Right ventricle myocardium inferior (tissue), 1 donor: ENCODE measurements at regions of chr19 and their contacts with region 1.

Region 1: GRCh38 chr19:41993612-41994483 is at the start of gene ATP1A3:
- DNase-seq: peak; percentile 86
- ATAC-seq: peak; percentile 78
- total RNA-seq, gene ATP1A3: 342 TPM

Region 2: DNA sequence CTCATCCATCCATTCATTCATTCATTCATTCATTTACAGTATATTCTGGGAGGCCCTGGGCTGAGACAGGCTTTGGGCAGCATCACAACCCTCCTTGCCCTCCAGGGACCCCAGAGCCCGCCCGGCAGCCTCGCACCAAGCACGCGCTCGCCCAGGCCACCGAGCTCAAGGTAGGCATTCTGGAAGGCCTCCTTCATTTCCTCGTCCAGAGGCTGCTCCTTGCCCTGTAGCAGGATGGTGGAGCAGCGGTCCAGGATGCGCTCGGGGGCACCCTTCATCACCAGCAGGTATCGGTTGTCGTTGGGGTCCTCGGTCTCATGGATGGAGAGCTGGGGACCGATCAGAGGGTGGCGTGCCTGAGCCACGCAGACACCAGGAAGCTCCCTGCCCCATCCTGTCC is 15.4 kb before region 1 on chr19:
- intact Hi-C with region 1: no loop called
- DNase-seq: peak; percentile 44
- ATAC-seq: no peak

Region 3: DNA sequence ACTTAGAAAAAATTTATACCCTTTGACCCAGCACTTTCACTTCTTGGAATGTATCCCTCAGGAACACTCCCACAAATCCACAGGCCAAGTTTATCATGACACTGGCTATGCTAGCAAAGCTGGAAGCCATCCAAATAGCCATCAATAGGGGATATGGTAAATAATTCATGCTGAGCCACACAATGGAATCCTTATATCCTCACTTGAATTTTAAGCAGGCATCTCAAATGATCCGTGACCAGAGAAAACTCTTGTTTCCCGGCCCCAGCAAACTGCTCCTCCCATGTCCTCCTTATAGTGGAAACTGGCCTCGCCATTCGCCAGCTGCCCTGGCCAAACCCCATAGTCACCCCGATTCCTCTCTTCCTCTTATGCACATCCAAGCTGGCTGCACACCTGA is 38.6 kb after region 1 on chr19:
- intact Hi-C with region 1: loop called (anchors 5 kb)
- DNase-seq: no peak
- ATAC-seq: no peak

Region 4: DNA sequence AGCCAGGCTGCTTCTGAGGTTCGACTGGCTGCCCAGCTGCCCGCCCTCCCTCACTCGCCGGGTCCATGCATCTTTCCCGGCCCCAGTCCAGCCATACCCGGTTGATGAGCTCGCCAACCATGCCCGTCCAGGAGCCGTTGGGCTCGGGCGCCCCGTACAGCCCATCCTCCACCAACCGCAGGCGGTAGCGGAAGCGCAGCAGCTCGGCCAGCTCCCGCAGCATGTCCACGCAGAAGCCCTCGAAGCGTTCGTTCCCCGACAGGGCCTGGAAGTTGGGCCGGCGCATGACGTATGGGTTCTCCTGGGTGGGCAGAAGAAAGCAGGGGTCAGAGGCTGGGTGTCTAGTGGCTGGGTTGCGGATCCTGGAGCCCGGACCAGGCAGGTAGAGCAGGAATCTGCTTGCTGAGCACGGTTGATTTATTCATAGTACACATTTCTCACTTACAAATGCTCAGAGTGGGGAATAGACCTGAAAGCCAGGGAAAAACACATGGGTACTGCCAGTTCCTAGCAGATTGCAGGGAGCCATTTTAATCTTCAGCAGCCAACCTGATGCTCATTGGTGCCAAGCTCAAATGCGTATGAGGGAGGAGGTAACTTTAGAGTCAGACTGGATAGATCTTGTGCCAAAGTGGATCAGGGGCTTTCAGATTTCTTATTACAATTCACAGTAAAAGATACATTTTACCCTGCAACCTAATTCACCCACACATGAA is 48.8 kb after region 1 on chr19:
- intact Hi-C with region 1: no loop called
- DNase-seq: no peak
- ATAC-seq: no peak

Region 5: GRCh38 chr19:42075616-42076379 is 82.0 kb after region 1 on chr19 and contains the start of gene ZNF574:
- intact Hi-C with region 1: loop called (anchors 1 kb)
- DNase-seq: peak; percentile 99
- ATAC-seq: peak; percentile 99
- total RNA-seq, gene ZNF574: 9.1 TPM

Region 6: DNA sequence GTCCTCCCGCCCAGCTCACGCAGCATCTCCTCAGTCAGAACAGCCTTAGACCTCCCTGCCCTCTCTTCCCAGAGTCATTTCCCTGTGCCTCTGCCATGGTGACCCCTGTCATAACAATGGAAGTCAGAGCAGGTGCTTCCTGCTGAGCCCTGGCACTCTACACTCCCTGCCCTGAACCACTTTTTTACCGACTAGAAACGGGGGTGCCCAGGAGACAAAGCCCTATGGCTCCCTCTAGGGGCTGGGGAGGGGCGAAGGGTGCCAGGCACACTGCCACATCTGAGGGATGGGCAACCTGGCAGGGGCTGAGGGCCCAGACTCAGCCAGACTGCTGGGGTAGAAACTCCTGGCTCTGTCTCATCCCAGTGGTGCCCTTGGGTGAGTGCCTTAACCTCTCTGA is 98.5 kb after region 1 on chr19:
- intact Hi-C with region 1: loop called (anchors 5 kb)
- DNase-seq: no peak
- ATAC-seq: peak; percentile 40